Activated naive CD4-positive, alpha-beta T cell treated with anti-CD3 and anti-CD28 coated beads for 36 hours (primary cell): ENCODE measurements at regions of chr5 and their contacts with region 1.

Region 1: DNA sequence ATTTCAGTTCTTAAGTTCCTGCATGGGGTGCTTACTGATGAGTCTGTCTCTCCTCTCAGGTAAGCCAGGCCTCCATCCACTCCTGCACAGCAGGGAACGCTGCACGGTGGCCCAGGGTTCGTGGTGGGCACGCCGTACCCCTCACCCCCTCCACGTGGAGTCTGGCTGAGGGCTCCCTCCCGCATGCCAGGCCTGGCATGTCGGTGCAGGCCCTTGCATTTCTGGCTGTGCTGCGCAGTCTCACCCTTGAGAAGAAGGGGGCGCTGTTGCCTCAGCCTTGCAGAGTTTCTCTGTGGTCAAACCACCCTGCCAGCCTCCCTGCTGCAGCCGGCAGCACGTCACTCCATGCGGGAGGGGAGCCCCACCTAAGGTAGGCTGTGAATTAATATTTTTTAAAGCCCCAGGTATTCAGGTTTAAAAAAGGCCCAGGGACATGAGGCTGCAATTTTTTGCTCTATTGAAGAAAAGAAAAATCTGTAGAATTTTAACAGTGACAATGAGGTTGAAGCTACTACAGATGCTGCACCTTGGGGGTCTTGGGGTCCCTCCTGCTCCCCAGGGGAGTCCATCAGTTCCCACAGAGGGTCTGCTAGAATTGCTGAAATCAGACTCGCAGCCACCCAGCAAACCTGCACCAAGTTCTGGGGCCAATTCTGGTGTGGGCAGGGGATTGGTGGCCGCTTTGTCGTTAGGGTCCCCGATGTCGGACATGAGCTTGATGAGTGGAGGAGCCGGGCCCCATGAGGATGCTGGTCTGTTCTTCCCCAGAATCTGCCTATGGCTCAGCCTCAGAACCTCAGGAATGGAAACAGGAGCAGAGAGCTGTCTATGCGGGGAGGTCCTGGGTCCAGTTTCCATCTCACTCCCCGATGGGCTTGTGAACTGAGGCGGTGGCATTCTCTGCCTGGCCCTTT is 52.6 kb downstream of the TENT4A start:
- DNase-seq: peak; percentile 87
- H3K4me3 Mint-ChIP-seq: no peak overlapping the region
- H3K27ac Mint-ChIP-seq: no peak overlapping the region
- H3K4me1 Mint-ChIP-seq: peaks cover 10% of the 10 kb centered on the region
- H3K27me3 Mint-ChIP-seq: no peaks in the 10 kb centered on the region

Region 2: DNA sequence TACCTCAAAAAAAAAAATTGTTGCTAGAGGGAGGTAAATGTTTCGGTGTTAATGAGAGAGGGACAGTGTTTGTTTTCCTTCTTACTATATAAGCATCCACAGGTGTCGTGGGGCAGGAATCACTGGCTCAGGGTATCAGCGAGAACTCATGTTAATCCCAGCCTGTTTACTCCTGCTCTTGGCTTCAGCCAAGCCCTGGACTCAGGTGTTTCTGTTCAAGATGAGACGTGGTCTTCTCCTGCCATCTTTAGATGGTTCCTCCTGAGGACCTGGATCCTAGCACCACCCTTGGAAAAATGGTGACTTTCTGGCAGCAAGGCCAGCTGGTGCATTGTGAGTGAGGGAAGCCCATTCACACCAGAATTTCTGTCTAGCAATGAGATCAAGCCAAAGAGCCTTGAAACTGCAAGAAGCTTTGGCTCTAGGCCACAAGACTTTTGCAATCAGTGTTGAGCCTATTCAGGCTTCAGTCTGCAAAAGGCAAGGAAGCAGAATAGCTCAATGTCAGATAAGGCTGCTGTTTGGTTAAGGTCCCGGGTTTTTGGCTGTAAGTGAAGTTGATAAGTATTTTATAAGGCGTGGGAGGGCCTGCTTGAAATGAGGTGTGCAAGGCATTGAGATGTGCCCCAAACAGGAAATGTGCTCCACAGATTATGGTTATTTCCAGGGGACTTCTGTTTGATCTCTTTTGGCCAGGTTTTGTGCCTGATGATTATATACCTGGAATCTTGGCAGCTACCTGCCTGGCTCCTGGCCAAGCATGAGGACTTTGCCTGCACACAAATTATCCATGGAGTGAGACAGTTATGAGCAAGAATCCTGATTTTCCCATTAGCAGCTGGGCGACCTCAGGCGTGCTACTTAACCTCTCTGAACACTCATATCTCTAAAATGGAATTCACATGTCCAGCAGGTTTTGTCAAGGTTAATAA is 47.2 kb after region 1 on chr5:
- CTCF ChIA-PET with region 1: no interaction called
- intact Hi-C with region 1: no loop called
- DNase-seq: no peak
- H3K4me3 Mint-ChIP-seq: no peak overlapping the region
- H3K27ac Mint-ChIP-seq: no peak overlapping the region
- H3K4me1 Mint-ChIP-seq: no peaks in the 10 kb centered on the region
- H3K27me3 Mint-ChIP-seq: peaks cover 6% of the 10 kb centered on the region

Region 3: GRCh38 chr5:6837519-6838110 is 71.7 kb after region 1 on chr5:
- CTCF ChIA-PET with region 1: interaction called, 3 read pairs
- intact Hi-C with region 1: loop called (anchors 2 kb)
- DNase-seq: peak; percentile 56
- H3K4me3 Mint-ChIP-seq: no peak overlapping the region
- H3K27ac Mint-ChIP-seq: no peak overlapping the region
- H3K4me1 Mint-ChIP-seq: no peaks in the 10 kb centered on the region
- H3K27me3 Mint-ChIP-seq: peaks cover 11% of the 10 kb centered on the region

Region 4: DNA sequence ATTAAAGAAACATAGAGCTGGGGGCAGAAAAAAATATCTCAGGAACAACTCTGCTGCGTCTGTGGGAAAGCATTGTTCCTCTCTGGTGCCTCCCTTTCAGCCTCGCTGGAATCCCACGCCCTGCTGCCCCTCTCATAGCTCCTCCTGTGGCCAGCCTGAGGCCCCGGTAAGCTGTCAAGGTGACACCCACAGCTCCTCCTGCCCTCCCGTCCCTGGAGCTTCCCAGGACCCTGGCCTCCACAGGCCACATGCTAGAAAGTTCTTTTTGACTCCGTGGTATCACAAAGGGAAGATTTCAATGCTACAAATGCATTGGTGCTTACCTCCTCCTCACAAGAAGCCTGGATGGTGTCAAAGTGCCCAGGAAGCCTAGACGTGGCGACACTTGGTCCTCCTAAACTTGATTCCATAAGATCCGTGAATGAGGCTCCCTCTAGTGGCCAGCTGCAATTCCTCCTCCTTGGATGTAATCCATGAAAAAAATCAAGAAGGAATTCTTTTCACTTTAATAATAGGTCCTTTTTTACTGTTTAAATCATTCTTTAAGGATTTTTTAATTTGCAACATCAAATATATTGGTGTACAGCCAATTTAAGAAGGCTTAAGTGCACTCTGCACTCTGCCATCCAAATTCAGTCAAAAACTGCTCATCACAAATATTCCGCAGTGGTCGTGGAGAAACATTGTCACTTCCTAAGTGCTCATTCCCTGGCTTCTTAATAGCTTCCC is 980.2 kb after region 1 on chr5:
- CTCF ChIA-PET with region 1: interaction called, 3 read pairs
- intact Hi-C with region 1: loop called (anchors 2 kb)
- DNase-seq: peak; percentile 69
- H3K4me3 Mint-ChIP-seq: no peak overlapping the region
- H3K27ac Mint-ChIP-seq: no peak overlapping the region
- H3K4me1 Mint-ChIP-seq: no peaks in the 10 kb centered on the region
- H3K27me3 Mint-ChIP-seq: peaks cover 6% of the 10 kb centered on the region

Region 5: DNA sequence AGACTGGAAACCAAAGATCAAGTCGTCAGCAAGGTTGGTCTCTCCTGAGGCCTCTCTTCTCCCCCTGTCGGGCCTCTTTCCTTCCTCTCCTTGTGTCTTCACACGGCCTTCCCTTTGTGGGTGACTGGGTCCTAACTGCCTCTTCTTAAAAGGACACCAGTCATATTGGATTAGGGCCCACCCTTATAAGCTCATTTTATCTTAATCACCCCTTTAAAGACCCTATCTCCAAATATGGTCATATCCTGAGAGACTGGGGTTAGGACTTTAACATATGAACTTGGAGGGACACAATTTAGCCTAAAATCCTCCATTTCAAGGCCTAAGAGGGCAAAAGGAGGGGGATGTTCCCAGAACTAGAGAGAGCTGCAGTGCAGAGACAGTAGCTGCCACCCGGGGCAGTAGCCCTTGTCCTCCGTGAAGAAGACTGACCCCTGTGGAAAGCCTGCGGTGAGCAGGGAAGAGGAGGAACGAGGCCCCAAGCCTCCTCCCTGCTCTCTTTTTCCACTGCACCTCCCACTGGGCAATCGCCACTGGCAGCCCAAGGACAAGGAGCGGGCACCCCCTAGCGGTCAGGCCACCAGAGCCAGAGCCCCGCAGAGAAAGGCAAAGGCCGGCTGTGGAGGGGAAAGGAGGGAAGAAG is 1050.1 kb after region 1 on chr5:
- CTCF ChIA-PET with region 1: no interaction called
- intact Hi-C with region 1: loop called (anchors 1 kb)
- DNase-seq: peak; percentile 75
- H3K4me3 Mint-ChIP-seq: no peak overlapping the region
- H3K27ac Mint-ChIP-seq: no peak overlapping the region
- H3K4me1 Mint-ChIP-seq: peaks cover 4% of the 10 kb centered on the region
- H3K27me3 Mint-ChIP-seq: peaks cover 49% of the 10 kb centered on the region